B cell (primary cell): ENCODE measurements at regions of chr7 and their contacts with region 1.

Region 1: GRCh38 chr7:128732521-128733277 is 6.5 kb upstream of the CALU start:
- DNase-seq: no peak
- ATAC-seq: no peak
- H3K4me3 ChIP-seq: no peak overlapping the region
- H3K4me3 Mint-ChIP-seq: no peak overlapping the region
- H3K27ac ChIP-seq: no peak overlapping the region
- H3K27ac Mint-ChIP-seq: no peak overlapping the region
- H3K4me1 ChIP-seq: peaks cover 20 to 26% of the 10 kb centered on the region in 2 donors
- H3K4me1 Mint-ChIP-seq: peaks cover 4% of the 10 kb centered on the region
- H3K27me3 ChIP-seq: peaks cover 0 to 7% (median 0%) of the 10 kb centered on the region in 4 experiments
- H3K27me3 Mint-ChIP-seq: peaks cover 8% of the 10 kb centered on the region
- CTCF ChIP-seq: no peak

Region 2: GRCh38 chr7:128763541-128763940 is 30.8 kb after region 1 on chr7:
- CTCF ChIA-PET with region 1: no interaction called
- POLR2A ChIA-PET with region 1: no interaction called
- intact Hi-C with region 1: loop called (anchors 1 kb)
- DNase-seq: no peak
- ATAC-seq: no peak
- H3K4me3 ChIP-seq: no peak overlapping the region
- H3K4me3 Mint-ChIP-seq: no peak overlapping the region
- H3K27ac ChIP-seq: no peak overlapping the region
- H3K27ac Mint-ChIP-seq: no peak overlapping the region
- H3K4me1 ChIP-seq: no peaks in the 10 kb centered on the region
- H3K4me1 Mint-ChIP-seq: no peaks in the 10 kb centered on the region
- H3K27me3 ChIP-seq: no peaks in the 10 kb centered on the region
- H3K27me3 Mint-ChIP-seq: no peaks in the 10 kb centered on the region
- CTCF ChIP-seq: no peak